ENCODE measurements at regions of chr11 and their contacts with region 1.

Region 1: DNA sequence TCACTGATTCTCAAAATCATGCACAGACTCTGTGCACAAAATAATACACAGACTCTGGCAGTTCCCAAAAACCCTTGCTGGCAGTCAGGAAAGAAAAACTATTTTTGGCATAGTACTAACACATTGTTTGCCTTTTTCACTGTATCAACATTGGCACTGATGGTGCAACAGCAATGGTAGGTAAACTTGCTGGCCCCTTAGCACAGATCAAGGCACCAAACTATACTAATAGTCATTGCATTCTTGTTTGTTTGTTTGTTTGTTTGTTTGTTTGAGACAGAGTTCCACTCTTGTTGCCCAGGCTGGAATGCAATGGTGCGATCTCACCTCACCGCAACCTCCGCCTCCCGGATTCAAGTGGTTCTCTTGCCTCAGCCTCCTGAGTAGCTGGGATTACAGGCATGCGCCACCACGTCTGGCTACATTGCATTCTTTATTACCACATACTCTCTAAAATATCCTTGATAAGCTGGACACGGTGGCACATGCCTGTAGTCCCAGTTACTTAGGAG is 81.0 kb upstream of the SLC6A5 start:
- DNase-seq: no peak
- ATAC-seq: no peak
- H3K4me3 ChIP-seq: no peak overlapping the region
- H3K27ac ChIP-seq: no peak overlapping the region
- H3K4me1 ChIP-seq: no peaks in the 10 kb centered on the region
- H3K27me3 ChIP-seq: no peaks in the 10 kb centered on the region
- CTCF ChIP-seq: no peak
- EP300 ChIP-seq: no peak
- POLR2A ChIP-seq: no peak
- RAD21 ChIP-seq: no peak

Region 2: DNA sequence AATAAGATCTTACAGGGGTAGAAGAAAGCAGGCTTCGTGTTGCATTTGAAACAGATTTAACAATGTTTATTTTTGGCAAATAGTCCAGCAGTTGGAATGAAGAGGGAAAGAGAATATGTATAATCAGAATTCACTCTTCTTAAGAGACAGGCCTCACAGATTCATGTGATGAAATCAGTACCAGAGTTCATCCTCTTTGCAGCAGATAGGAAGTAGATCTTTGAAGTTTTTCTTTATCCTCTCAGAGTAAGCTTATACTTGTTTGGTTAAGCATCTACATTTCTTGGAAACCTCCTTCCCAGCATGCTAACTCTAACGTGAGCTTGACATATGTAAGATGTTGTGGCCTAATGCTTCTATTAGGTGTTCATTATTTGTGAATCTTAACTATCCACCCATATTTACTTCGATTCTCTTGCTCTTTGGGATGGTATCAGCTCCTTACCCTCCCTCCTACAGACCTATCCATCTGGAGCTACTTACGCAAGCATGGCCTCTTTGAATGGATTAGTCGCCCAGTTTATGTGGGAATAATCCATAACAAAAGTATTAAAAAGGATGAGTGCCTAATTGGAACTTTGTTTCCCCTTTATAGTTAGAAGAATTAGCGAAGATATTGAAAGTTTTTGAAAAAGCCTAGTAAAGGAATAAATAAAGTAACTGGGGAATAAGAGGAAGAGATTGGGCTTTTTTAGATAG is 50.7 kb before region 1 on chr11:
- CTCF ChIA-PET with region 1: no interaction called
- POLR2A ChIA-PET with region 1: no interaction called
- in situ Hi-C with region 1: no loop called
- intact Hi-C with region 1: no loop called
- DNase-seq: no peak
- ATAC-seq: peak; percentile 33; the same call in 1 of the 3 replicates
- H3K4me3 ChIP-seq: no peak overlapping the region
- H3K27ac ChIP-seq: no peak overlapping the region
- H3K4me1 ChIP-seq: peaks cover 0 to 5% of the 10 kb centered on the region in 2 experiments; a peak in 2 of 5 replicates
- H3K27me3 ChIP-seq: no peaks in the 10 kb centered on the region
- CTCF ChIP-seq: no peak
- EP300 ChIP-seq: no peak
- POLR2A ChIP-seq: no peak
- RAD21 ChIP-seq: no peak

Region 3: DNA sequence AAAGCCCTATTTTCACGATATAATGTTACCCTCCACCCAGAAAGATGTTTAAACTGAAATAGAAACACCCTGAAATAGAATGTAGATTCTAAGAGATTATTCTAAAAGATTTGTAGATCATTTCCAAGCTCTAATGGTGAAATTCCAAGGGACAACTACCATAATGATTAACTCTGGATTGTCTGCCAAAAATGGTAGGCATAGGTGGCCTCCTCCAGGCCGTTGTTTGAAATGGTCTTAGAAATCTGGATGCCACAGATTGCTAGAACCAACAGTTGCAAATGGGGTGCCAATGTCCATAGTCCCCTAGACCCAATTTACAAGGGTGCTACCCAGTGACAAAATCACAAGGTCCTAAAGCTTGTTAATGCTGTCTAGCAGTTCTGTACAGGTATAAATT is 74.4 kb after region 1 on chr11:
- CTCF ChIA-PET with region 1: no interaction called
- POLR2A ChIA-PET with region 1: no interaction called
- in situ Hi-C with region 1: no loop called
- intact Hi-C with region 1: loop called (anchors 5 kb)
- DNase-seq: no peak
- ATAC-seq: no peak
- H3K4me3 ChIP-seq: no peak overlapping the region
- H3K27ac ChIP-seq: no peak overlapping the region
- H3K4me1 ChIP-seq: peaks cover 3 to 18% of the 10 kb centered on the region in 2 experiments; a peak in 3 of 5 replicates
- H3K27me3 ChIP-seq: peaks cover 8 to 33% of the 10 kb centered on the region in 2 experiments
- CTCF ChIP-seq: 0 out of 6 replicates have a peak, but pooled peaks of 1 of the 3 experiments have one; percentile 24
- EP300 ChIP-seq: no peak
- POLR2A ChIP-seq: no peak
- RAD21 ChIP-seq: peak in 1 of 2 experiments; percentile 28; a peak in 3 of 4 replicates

Measured in K562 (cell line).